Transverse colon (tissue), 4 donors: ENCODE measurements at regions of chr6 and their contacts with region 1.

Region 1: GRCh38 chr6:145887969-145888368 is 73.4 kb upstream of the FBXO30 start:
- DNase-seq: no peak
- H3K4me3 ChIP-seq: no peak overlapping the region
- H3K27ac ChIP-seq: peak overlapping the region in 1 of 4 donors; percentile 33
- H3K4me1 ChIP-seq: peaks cover 0 to 12% (median 0%) of the 10 kb centered on the region in 4 donors
- H3K27me3 ChIP-seq: no peaks in the 10 kb centered on the region
- CTCF ChIP-seq: peak; percentile 24 to 36 (median 34)
- EP300 ChIP-seq: no peak
- POLR2A ChIP-seq: no peak

Region 2: DNA sequence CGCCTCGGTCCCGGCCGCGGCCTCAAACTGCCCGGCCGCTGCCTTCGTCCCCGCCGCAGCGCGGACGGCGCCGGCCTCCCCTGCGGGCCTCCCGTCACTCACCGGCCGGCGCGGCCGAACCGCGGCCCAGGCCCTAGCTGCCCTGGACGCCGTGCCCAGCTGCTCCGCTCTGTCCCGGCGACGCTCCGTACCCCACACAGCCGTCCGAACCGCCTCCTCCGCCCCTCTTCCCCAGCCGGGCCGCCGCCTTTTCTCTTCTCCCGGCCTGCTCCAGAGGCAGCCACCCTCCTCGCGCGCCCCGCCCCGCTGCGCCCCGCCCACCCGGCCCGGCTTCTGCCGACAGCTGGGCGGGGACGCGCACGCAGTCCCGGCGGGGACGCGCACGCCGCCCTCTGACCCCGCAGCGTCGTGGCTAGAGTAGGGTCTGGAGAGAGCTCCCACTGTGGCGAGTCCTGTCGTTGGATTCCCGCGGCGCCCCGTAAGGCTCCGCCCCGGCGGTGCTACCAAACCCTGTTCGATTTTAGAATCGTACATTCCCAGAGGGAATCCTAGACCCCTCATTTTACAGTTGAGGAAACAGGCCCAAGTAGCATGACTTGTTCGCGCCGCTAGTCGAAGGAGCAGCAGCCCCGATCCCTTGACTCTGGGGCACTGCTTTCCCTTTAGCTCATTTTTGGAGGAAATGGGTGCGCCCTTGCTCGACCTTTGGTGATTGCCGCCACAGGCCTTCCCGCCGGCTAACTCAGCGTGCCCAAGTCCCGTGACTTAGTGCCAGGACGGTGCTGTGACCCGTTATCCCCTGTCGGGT is 73.3 kb before region 1 on chr6 and contains the start of gene FBXO30:
- in situ Hi-C with region 1: no loop called
- intact Hi-C with region 1: loop called (anchors 10 kb)
- DNase-seq: peak; percentile 89
- H3K4me3 ChIP-seq: peak within 1 kb of the TSS; percentile 67 to 95 (median 80)
- H3K27ac ChIP-seq: peak within 1 kb of the TSS; percentile 95 to 99 (median 97)
- H3K4me1 ChIP-seq: peaks cover 0 to 46% (median 19%) of the 10 kb centered on the region in 4 donors
- H3K27me3 ChIP-seq: no peaks in the 10 kb centered on the region
- CTCF ChIP-seq: peak in 4 of 5 experiments; percentile 22 to 66 (median 52)
- EP300 ChIP-seq: no peak
- POLR2A ChIP-seq: peak; percentile 69
- total RNA-seq, gene FBXO30: 6.0 to 13.0 (median 9.2) TPM